Right cardiac atrium (tissue), 5 donors: ENCODE measurements at regions of chr7 and their contacts with region 1.

Region 1: DNA sequence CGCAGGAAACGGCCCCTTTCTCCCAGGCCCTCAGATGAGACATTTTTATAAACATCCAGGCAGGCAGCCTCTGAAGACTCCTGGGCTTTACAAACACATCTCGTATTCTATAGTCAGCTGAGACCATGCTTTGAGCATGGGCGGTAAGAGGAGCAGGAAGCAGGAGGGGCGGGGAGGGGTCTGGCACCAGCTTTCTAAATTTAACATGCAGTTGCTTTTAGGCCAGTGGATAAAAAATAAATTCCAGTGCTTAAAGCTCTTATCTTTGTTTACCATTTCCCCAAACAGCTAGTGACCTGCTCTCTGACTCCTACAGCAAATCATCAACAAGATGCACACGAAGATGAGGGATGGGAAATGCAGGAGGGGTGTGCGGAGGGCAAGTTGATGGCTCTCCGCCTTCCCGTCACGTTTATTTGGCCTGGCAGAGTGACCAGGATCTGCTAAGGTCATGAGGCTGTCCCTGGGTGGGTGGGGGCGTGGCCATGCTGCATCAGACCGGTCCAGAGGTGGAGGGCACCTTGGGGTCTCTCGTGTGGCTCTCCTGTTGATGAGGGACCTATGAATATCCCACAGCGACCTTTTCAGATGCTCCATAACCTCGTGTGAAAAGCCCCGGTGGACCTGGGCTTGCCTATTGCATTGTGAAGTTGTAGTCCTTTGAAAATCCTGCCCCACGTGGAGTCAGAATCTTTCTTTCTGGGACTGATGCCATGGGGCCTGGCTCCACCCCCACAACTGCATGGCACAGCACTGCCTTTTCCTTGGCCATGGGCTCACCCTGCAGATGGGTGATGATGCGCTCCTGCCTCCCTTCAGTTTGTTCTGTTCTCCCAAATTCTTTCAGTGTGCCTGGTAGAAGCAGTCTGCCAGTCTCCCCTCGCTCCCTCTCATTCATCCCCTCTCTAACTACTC is 67.5 kb downstream of the PARP12 start:
- DNase-seq: peak; percentile 40 to 74 (median 73)
- ATAC-seq: peak; percentile 70 to 76
- H3K4me3 ChIP-seq: no peak overlapping the region
- H3K27ac ChIP-seq: no peak overlapping the region
- H3K4me1 ChIP-seq: no peaks in the 10 kb centered on the region
- H3K27me3 ChIP-seq: no peaks in the 10 kb centered on the region

Region 2: GRCh38 chr7:139783647-139784385 is 211.5 kb before region 1 on chr7:
- intact Hi-C with region 1: loop called in 3 of 4 experiments (anchors 5 to 10 kb)
- DNase-seq: no peak
- ATAC-seq: no peak
- H3K4me3 ChIP-seq: no peak overlapping the region
- H3K27ac ChIP-seq: no peak overlapping the region
- H3K4me1 ChIP-seq: no peaks in the 10 kb centered on the region
- H3K27me3 ChIP-seq: no peaks in the 10 kb centered on the region

Region 3: GRCh38 chr7:139901056-139901795 is 94.0 kb before region 1 on chr7:
- intact Hi-C with region 1: no loop called
- DNase-seq: no peak
- ATAC-seq: no peak
- H3K4me3 ChIP-seq: no peak overlapping the region
- H3K27ac ChIP-seq: no peak overlapping the region
- H3K4me1 ChIP-seq: peaks cover 3% of the 10 kb centered on the region
- H3K27me3 ChIP-seq: no peaks in the 10 kb centered on the region